Activated CD4-positive, alpha-beta memory T cell treated with anti-CD3 and anti-CD28 coated beads for 36 hours (primary cell): ENCODE measurements at regions of chr16 and their contacts with region 1.

Region 1: DNA sequence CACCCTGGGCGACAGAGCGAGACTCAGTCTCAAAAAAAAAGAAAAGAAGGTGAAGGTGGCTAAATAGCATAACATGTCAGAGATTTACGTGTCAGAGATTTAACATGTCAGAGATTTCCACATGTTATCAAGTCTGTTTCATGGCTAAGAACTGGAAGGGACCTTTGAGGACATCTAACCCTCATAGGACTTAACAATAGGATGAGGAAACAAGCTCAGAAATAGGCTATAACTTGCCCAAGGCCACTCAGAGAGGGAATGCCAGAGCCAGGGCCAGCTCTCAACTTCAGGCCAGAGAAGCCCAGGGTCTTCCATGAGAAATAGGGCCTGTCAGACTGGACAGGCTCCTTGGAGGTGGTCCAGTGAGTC is 26.8 kb upstream of the ZNF629 start:
- DNase-seq: no peak
- H3K4me3 Mint-ChIP-seq: peak overlapping the region; percentile 84
- H3K27ac Mint-ChIP-seq: peak overlapping the region; percentile 72
- H3K4me1 Mint-ChIP-seq: peaks cover 11% of the 10 kb centered on the region
- H3K27me3 Mint-ChIP-seq: no peaks in the 10 kb centered on the region

Region 2: DNA sequence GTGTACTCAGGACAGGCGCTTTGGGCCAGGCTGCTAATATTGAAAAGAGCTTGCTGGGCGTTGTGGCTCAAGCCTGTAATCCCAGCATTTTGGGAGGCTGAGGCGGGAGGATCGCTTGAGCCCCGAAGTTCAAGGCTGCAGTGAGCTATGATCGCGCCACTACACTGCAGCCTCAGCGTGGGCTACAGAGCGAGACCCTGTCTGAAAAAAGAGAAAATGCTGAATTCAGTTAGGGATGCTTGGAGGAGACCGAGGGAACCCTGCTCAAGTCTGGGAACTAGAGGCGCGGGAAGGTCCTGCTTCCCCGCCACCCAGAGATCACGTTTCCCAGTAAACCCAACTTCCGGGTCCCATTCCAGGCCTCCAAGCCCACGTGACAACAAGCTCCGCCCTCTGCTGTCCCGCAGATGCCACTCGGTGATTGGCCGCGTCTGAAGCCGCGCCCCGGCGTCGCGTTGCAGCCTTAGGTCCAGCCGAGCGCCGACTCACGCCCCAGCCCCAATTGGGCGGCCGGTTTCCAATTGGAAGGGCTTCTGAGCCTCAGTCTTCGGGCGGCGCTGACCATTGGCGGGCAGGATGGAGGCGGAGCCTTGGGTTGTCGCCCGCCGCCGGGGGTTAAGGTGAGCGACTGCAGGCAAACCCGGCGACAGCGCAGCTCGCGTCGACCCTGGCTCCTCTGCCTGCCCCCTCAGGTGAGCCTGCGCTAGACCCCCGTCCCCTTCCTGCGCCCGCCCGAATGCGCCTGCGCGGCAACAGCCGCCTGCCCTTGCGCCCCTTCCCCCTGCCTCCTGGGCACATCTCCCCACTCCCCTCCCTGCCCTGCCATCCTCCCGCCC is 65.8 kb before region 1 on chr16 and contains the start of gene PHKG2:
- CTCF ChIA-PET with region 1: interaction called, 13 read pairs
- POLR2A ChIA-PET with region 1: interaction called, 6 read pairs
- intact Hi-C with region 1: loop called (anchors 2 kb)
- DNase-seq: peak; percentile 99
- H3K4me3 Mint-ChIP-seq: peak within 1 kb of the TSS; percentile 91
- H3K27ac Mint-ChIP-seq: peak within 1 kb of the TSS; percentile 77
- H3K4me1 Mint-ChIP-seq: peaks cover 23% of the 10 kb centered on the region
- H3K27me3 Mint-ChIP-seq: no peaks in the 10 kb centered on the region
- total RNA-seq, gene PHKG2: 24.1 to 27.9 TPM

Region 3: DNA sequence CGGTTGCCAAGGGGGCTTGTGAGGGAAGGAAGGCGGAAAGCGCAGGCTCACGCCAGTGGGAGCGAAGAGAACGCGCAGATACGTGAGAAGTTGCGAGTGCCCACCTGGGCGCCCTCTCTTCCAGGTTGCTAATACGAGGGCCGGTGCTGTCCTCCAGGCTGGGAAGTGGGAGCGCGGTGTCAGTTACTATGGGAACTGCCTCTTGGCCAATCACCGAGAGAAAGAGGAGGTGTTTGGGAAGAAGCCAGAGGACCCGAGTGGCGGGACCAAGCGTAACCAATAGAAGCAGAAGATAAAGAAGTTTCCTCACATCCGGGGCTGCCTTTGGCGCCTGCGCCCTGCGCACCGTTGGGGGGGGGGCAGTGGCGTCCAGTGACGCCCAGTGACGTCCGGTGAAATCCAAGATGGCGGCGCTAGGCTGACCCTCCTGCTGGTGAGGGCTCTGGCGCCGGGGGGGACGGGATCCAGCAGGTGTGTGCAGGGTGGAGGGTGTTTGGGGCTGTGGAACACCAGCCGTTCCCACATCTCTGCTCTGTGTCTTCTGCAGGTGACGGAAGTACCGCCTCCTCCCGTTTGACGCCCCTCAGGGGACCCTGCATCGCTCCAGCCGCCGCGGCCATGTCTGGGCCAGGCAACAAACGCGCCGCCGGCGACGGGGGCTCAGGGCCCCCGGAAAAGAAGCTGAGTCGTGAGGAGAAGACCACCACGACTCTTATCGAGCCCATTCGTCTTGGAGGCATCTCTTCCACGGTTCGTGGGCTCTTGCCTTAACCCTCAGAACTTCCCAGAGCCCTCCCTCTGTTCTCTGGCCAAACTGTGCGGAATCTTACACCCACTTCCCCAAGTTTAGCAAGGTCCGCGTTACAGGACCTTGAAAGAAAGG is 51.6 kb before region 1 on chr16 and contains the starts of genes CFAP119 and RNF40:
- CTCF ChIA-PET with region 1: interaction called, 30 read pairs
- POLR2A ChIA-PET with region 1: no interaction called
- intact Hi-C with region 1: no loop called
- DNase-seq: peak; percentile 96
- H3K4me3 Mint-ChIP-seq: peak within 1 kb of the TSS; percentile 93
- H3K27ac Mint-ChIP-seq: peak within 1 kb of the TSS; percentile 81
- H3K4me1 Mint-ChIP-seq: peaks cover 25% of the 10 kb centered on the region
- H3K27me3 Mint-ChIP-seq: no peaks in the 10 kb centered on the region
- total RNA-seq, gene CFAP119: 3.8 to 4.9 TPM
- total RNA-seq, gene RNF40: 70.9 to 72.8 TPM

Region 4: GRCh38 chr16:30874821-30875717 is 61.3 kb after region 1 on chr16:
- CTCF ChIA-PET with region 1: interaction called, 6 read pairs
- POLR2A ChIA-PET with region 1: interaction called, 5 read pairs
- intact Hi-C with region 1: loop called (anchors 2 kb)
- DNase-seq: peak; percentile 93
- H3K4me3 Mint-ChIP-seq: peak overlapping the region; percentile 96
- H3K27ac Mint-ChIP-seq: peak overlapping the region; percentile 90
- H3K4me1 Mint-ChIP-seq: peaks cover 34% of the 10 kb centered on the region
- H3K27me3 Mint-ChIP-seq: no peaks in the 10 kb centered on the region

Region 5: GRCh38 chr16:30902029-30902972 is 88.5 kb after region 1 on chr16:
- CTCF ChIA-PET with region 1: interaction called, 16 read pairs
- POLR2A ChIA-PET with region 1: no interaction called
- intact Hi-C with region 1: no loop called
- DNase-seq: peak; percentile 69
- H3K4me3 Mint-ChIP-seq: peak overlapping the region; percentile 93
- H3K27ac Mint-ChIP-seq: peak overlapping the region; percentile 95
- H3K4me1 Mint-ChIP-seq: peaks cover 27% of the 10 kb centered on the region
- H3K27me3 Mint-ChIP-seq: no peaks in the 10 kb centered on the region

Region 6: DNA sequence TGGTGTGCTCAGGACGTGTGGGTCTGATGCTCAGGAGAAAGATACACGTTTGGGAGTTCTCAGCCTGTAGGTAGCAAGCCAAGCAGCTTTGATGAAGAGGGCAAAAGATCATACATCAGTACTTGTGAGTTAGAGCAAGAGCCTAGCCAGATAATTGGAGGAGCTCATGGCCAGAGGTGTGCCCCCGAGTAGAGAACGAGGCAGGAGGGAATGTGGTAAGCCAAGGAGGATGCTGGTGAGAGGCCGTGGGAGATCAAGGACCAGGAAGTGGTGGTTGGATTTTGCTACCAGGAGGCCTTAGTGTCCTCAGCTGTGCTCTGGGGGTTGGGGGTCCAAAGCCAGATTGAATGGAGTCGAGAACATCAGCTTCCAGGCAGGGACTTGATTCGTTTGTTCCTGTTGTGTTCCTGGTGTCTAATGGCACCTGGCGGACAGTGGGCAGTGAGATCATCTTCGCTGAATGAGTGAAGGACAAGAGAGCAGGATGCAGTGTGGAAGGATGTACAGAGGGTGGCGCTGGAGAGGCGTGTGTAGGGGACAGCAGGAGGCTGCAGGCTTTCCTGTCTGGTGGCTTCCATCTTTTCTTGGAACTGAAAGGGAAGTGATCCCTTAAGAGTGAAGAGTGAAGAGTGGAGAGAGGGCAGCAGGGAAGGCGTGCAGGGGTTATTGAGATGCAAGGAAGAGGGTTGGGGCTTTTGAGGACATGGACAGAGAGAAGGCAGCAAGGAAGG is 121.2 kb after region 1 on chr16:
- CTCF ChIA-PET with region 1: no interaction called
- POLR2A ChIA-PET with region 1: no interaction called
- intact Hi-C with region 1: no loop called
- DNase-seq: peak; percentile 74
- H3K4me3 Mint-ChIP-seq: no peak overlapping the region
- H3K27ac Mint-ChIP-seq: peak overlapping the region; percentile 35
- H3K4me1 Mint-ChIP-seq: peaks cover 11% of the 10 kb centered on the region
- H3K27me3 Mint-ChIP-seq: no peaks in the 10 kb centered on the region